Stomach (tissue), 19 donors: ENCODE measurements at regions of chr14 and their contacts with region 1.

Region 1: DNA sequence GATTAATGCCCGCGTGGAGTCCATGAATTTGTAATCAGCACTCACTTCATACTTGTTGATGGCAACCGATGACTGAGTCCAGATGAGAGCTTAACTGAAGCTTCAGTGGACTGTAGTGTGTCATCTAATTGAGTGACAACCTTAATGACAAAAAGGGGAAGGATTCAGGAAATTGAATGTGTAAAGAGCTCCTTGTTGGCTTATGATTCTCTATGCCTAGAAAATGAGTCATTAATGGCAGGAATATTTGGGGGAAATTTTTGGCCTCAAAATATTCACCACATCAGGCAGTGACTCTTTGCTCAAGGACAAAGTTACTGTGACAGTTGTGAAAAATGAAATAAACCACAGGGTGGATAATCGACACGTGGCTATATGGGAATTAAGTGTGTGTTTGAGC is 55.3 kb upstream of the STON2 start:
- DNase-seq: no peak
- H3K4me3 ChIP-seq: no peak overlapping the region
- H3K27ac ChIP-seq: no peak overlapping the region
- H3K4me1 ChIP-seq: peaks cover 0 to 6% (median 0%) of the 10 kb centered on the region in 4 donors
- H3K27me3 ChIP-seq: peaks cover 0 to under 1% (median 0%) of the 10 kb centered on the region in 3 donors
- CTCF ChIP-seq: no peak
- EP300 ChIP-seq: no peak
- POLR2A ChIP-seq: no peak

Region 2: GRCh38 chr14:81273521-81273920 is 181.9 kb before region 1 on chr14:
- intact Hi-C with region 1: loop called (anchors 5 kb)
- DNase-seq: no peak
- H3K4me3 ChIP-seq: no peak overlapping the region
- H3K27ac ChIP-seq: no peak overlapping the region
- H3K4me1 ChIP-seq: peaks cover 0 to 13% (median 6%) of the 10 kb centered on the region in 4 donors
- H3K27me3 ChIP-seq: no peaks in the 10 kb centered on the region
- CTCF ChIP-seq: no peak
- EP300 ChIP-seq: no peak
- POLR2A ChIP-seq: no peak

Region 3: DNA sequence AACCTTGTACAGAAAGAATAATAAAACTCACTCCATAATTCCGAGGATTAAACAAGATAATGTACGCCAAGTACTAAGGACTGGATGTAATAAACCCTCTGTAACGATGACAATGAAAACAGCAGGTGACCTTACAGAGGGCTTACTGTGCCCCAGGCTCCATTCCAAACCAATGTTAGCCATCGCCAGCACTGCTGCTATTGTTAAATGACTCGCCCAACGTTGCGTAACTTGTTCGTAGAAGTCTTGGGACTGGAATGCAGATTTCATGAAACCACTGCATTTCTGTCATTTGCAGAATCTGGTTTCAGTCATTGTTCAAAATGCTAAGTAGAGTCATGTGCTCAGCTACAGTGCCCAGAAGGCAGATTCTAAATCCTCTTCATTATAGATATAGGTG is 54.5 kb before region 1 on chr14:
- intact Hi-C with region 1: no loop called
- DNase-seq: peak; percentile 22 to 42
- H3K4me3 ChIP-seq: no peak overlapping the region
- H3K27ac ChIP-seq: peak overlapping the region in 4 of 5 donors; percentile 28 to 64 (median 40)
- H3K4me1 ChIP-seq: no peaks in the 10 kb centered on the region
- H3K27me3 ChIP-seq: no peaks in the 10 kb centered on the region
- CTCF ChIP-seq: no peak
- EP300 ChIP-seq: no peak
- POLR2A ChIP-seq: no peak